Calu3 (cell line): ENCODE measurements at regions of chr4 and their contacts with region 1.

Region 1: GRCh38 chr4:155777971-155778735 is 19.3 kb downstream of the GUCY1B1 start:
- DNase-seq: no peak
- H3K4me3 Mint-ChIP-seq: no peak overlapping the region
- H3K27ac Mint-ChIP-seq: no peak overlapping the region
- H3K4me1 Mint-ChIP-seq: peaks cover 9% of the 10 kb centered on the region
- H3K27me3 Mint-ChIP-seq: no peaks in the 10 kb centered on the region
- CTCF ChIP-seq: no peak

Region 2: GRCh38 chr4:155106629-155107028 is 671.5 kb before region 1 on chr4:
- CTCF ChIA-PET with region 1: no interaction called
- intact Hi-C with region 1: loop called (anchors 5 kb)
- DNase-seq: no peak
- H3K4me3 Mint-ChIP-seq: no peak overlapping the region
- H3K27ac Mint-ChIP-seq: no peak overlapping the region
- H3K4me1 Mint-ChIP-seq: no peaks in the 10 kb centered on the region
- H3K27me3 Mint-ChIP-seq: no peaks in the 10 kb centered on the region
- CTCF ChIP-seq: no peak

Region 3: DNA sequence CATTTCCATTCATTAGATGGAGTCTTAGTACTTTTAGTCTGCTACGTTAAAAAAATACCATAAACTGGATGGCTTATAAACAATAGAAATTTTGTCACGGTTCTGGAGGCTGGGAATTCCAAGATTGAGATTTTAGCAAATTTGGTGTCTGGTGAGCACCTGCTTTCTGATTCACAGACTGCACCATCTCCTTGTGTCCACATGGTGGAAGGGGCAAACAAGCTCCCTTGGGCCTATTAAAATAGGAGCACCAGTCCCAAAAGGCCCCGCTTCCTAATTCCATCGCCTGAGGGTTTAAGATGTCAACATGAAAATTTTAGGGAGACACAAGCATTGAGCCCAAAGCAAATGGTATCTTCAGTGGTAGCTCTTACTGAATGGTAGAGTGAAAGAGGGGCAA is 280.8 kb before region 1 on chr4:
- CTCF ChIA-PET with region 1: no interaction called
- intact Hi-C with region 1: no loop called
- DNase-seq: no peak
- H3K4me3 Mint-ChIP-seq: no peak overlapping the region
- H3K27ac Mint-ChIP-seq: no peak overlapping the region
- H3K4me1 Mint-ChIP-seq: no peaks in the 10 kb centered on the region
- H3K27me3 Mint-ChIP-seq: no peaks in the 10 kb centered on the region
- CTCF ChIP-seq: no peak